ENCODE measurements at regions of chr1 and their contacts with region 1.

Region 1: DNA sequence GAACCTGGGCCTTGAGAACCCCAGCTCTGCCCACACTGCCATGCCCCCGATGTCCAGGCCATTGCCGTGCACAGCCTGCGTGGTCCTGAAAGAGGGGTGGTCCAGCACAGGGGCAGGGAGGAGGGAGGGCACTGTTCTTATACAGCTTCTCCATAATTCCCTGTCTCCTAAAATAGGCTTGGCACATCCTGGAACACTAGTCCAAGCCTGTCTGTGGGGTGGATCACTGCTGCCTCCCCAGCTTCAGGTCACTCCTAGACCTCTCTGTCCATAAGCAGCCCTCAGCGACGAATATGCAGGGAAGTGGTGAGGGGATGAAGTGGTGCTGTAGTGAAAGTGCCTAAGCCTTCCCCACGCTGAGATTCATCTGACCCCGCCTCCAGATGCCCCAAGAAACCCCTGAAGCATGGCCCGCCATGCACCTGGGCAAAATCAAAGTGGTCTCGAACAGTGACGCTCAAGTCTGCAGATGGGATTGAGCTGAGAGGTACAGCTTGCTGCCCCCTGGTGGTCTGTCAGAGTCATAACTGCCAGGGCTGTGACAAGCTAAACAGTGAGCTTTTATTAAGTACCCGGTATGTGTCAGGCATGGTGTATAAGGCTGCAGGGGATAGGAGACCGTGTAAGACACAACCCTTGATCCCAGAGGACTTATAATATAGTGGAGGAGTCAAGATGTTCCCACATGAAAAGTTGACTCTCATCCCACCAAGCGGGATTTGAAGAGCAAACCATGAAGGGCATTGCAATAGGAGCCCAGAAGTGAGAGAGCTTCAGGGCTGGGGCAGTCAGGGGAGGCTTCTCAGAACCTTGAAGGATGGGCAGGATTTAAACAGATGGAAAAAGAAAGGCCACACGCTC is 66.6 kb downstream of the FAM163A start:
- DNase-seq: peak; percentile 82
- H3K4me3 Mint-ChIP-seq: no peak overlapping the region
- H3K27ac Mint-ChIP-seq: no peak overlapping the region
- H3K4me1 Mint-ChIP-seq: peaks cover 16% of the 10 kb centered on the region
- H3K27me3 Mint-ChIP-seq: peaks cover 42% of the 10 kb centered on the region
- CTCF ChIP-seq: peak; percentile 91

Region 2: GRCh38 chr1:179081687-179082332 is 727.9 kb before region 1 on chr1 and contains the start of gene TOR3A:
- CTCF ChIA-PET with region 1: interaction called, 24 read pairs
- POLR2A ChIA-PET with region 1: no interaction called
- intact Hi-C with region 1: loop called (anchors 2 kb)
- DNase-seq: peak; percentile 95
- H3K4me3 Mint-ChIP-seq: peak within 1 kb of the TSS; percentile 99
- H3K27ac Mint-ChIP-seq: peak within 1 kb of the TSS; percentile 98
- H3K4me1 Mint-ChIP-seq: peaks cover 12% of the 10 kb centered on the region
- H3K27me3 Mint-ChIP-seq: no peaks in the 10 kb centered on the region
- CTCF ChIP-seq: no peak
- total RNA-seq, gene TOR3A: 24.9 and 31.3 TPM in 2 replicates

Region 3: GRCh38 chr1:179706339-179706941 is 103.3 kb before region 1 on chr1:
- CTCF ChIA-PET with region 1: interaction called, 2,115 read pairs
- POLR2A ChIA-PET with region 1: interaction called, 40 read pairs
- intact Hi-C with region 1: loop called (anchors 1 kb)
- DNase-seq: peak; percentile 78
- H3K4me3 Mint-ChIP-seq: no peak overlapping the region
- H3K27ac Mint-ChIP-seq: no peak overlapping the region
- H3K4me1 Mint-ChIP-seq: no peaks in the 10 kb centered on the region
- H3K27me3 Mint-ChIP-seq: peaks cover 18% of the 10 kb centered on the region
- CTCF ChIP-seq: peak; percentile 92

Region 4: DNA sequence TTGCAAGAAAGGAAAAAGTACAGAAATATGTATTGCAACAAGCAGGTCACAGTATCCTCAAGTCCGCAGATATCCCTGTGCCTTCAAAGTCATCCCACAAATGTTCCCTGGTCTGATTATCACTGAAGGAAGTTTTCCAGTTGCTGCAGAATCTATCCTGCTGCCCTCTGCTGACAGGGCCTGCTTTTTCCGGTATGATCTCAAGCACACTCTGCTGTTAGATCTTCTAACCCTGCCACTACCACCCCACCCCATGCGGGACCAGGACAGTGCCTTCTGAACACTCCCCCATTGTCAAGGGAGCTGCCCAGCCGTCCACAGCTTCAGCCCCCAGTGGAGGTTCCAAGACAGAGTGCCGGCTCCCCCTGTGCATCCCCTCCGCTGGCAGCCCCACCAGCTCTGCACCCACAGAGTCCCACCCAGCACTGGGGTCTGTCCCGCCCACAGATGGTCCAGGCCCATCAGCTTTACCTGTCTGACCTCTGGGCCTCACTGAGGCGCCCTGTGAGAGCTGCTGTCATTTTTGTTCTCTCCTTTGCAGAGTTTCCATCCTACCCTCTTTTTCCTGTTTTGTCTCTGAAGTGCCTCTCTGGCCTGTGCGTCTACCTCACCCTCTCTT is 38.7 kb before region 1 on chr1:
- CTCF ChIA-PET with region 1: interaction called, 59 read pairs
- POLR2A ChIA-PET with region 1: no interaction called
- intact Hi-C with region 1: no loop called
- DNase-seq: no peak
- H3K4me3 Mint-ChIP-seq: no peak overlapping the region
- H3K27ac Mint-ChIP-seq: no peak overlapping the region
- H3K4me1 Mint-ChIP-seq: no peaks in the 10 kb centered on the region
- H3K27me3 Mint-ChIP-seq: no peaks in the 10 kb centered on the region
- CTCF ChIP-seq: no peak

Region 5: DNA sequence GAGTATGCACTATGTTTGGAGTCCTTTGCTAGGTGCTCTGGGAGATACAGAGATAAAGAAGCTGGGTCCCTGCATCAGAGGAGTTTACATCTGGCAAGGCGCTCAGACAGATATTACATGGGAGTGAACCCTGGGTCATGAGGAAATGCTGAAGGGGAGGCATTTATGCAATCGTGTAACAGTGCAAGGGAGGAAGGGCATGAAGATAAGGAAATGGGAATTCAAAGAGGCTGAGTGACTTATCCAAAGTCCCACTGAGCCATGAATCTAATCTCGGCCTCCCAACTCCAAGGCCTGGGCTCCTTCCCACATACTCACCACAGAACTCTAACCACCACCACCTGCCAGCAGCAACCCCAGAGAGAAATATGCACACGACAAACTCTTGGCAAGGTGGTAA is 15.1 kb before region 1 on chr1:
- CTCF ChIA-PET with region 1: interaction called, 362 read pairs
- POLR2A ChIA-PET with region 1: interaction called, 3 read pairs
- intact Hi-C with region 1: no loop called
- DNase-seq: no peak
- H3K4me3 Mint-ChIP-seq: no peak overlapping the region
- H3K27ac Mint-ChIP-seq: no peak overlapping the region
- H3K4me1 Mint-ChIP-seq: no peaks in the 10 kb centered on the region
- H3K27me3 Mint-ChIP-seq: no peaks in the 10 kb centered on the region
- CTCF ChIP-seq: no peak

Region 6: GRCh38 chr1:179840107-179840506 is 30.4 kb after region 1 on chr1:
- CTCF ChIA-PET with region 1: interaction called, 54 read pairs
- POLR2A ChIA-PET with region 1: no interaction called
- intact Hi-C with region 1: no loop called
- DNase-seq: no peak
- H3K4me3 Mint-ChIP-seq: no peak overlapping the region
- H3K27ac Mint-ChIP-seq: no peak overlapping the region
- H3K4me1 Mint-ChIP-seq: no peaks in the 10 kb centered on the region
- H3K27me3 Mint-ChIP-seq: no peaks in the 10 kb centered on the region
- CTCF ChIP-seq: no peak

Region 7: DNA sequence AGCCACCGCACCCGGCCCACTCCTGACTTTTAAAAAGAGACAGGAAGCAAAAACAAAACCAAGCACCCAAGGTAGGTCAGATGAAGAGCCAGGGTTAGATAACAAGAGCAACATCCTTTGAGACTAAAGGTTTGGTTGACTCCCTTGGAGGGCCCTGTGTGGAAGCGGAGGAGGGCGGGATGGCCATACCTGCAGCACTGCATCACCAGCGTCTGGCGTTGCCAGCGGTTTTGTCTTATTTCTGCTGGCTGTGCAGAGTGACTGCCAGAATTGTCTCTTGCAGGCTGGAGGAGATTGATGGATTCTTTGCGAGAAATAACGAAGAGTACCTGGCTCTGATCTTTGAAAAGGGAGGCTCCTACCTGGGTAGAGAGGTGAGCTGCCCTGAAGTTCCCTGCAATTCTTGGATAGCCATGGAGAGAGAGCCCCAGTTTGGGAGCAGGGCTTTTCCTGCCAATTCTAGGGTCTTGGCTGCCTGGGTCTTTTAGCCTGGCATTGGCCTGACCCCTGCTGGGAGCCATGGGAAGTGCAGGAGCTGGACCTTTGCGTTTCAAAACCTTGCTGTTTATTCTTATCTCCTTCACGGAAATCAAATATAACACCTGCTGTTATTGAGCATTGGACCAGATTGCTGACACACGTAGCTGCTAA is 368.9 kb after region 1 on chr1:
- CTCF ChIA-PET with region 1: interaction called, 17 read pairs
- POLR2A ChIA-PET with region 1: no interaction called
- intact Hi-C with region 1: no loop called
- DNase-seq: peak; percentile 72
- H3K4me3 Mint-ChIP-seq: no peak overlapping the region
- H3K27ac Mint-ChIP-seq: peak overlapping the region; percentile 60
- H3K4me1 Mint-ChIP-seq: peaks cover 5% of the 10 kb centered on the region
- H3K27me3 Mint-ChIP-seq: no peaks in the 10 kb centered on the region
- CTCF ChIP-seq: peak; percentile 98